ENCODE measurements at regions of chr1 and their contacts with region 1.

Region 1: GRCh38 chr1:153633716-153634665 is at the start of gene CHTOP:
- DNase-seq: peak; percentile 98
- ATAC-seq: peak; percentile 92
- H3K4me3 Mint-ChIP-seq: peak within 1 kb of the TSS; percentile 86
- H3K27ac Mint-ChIP-seq: peak within 1 kb of the TSS; percentile 100
- H3K4me1 Mint-ChIP-seq: peaks cover 22% of the 10 kb centered on the region
- H3K27me3 Mint-ChIP-seq: no peaks in the 10 kb centered on the region
- CTCF ChIP-seq: no peak
- total RNA-seq, gene CHTOP: 101 to 105 TPM (median 104 TPM) in 3 replicates

Region 2: DNA sequence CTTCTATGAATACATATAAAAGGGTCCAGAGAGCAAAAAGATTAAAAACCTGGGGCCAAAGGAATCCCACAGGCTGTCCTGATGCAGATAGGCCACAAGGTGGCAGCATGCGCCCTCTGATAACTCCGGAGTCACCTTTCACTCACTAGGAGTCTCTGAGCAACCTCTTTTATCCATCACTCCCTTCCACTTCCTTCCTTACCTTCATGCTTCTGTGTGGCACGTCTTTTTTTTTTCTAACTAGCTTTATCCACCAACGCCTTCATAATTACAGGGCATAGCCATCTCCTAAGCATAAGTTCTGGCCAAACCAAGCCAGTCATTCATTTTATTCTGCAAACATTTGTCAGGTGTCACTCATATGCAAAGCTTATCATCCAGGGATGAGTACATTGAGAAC is 281.5 kb before region 1 on chr1:
- CTCF ChIA-PET with region 1: interaction called, 12 read pairs
- POLR2A ChIA-PET with region 1: no interaction called
- DNase-seq: peak; percentile 68
- ATAC-seq: peak; percentile 29
- H3K4me3 Mint-ChIP-seq: no peak overlapping the region
- H3K27ac Mint-ChIP-seq: no peak overlapping the region
- H3K4me1 Mint-ChIP-seq: peaks cover 6% of the 10 kb centered on the region; the same call in 1 of the 2 replicates
- H3K27me3 Mint-ChIP-seq: peaks cover 18% of the 10 kb centered on the region; the same call in 1 of the 2 replicates
- CTCF ChIP-seq: peak; percentile 76

Region 3: DNA sequence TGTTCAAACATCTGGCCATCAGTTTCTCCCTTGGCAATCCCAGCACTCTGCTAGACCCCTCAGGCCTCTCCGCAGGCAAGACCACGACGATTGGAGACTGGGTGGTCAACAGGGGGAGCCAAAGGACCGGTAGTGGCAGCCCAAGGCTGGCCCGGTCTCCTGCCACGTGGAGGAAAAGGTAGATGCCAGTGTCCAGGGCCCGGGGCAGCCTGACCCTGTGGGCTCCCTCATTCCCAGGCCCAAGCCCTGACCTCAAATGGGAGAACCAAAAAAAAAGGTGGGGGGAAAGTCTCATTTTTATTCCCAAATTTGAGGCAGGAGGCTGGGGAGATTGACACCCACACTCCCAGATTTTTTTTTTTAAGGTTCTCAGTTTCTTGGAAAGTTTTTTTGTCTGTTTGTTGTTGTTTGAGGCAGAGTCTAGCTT is 123.0 kb before region 1 on chr1:
- CTCF ChIA-PET with region 1: interaction called, 36 read pairs
- POLR2A ChIA-PET with region 1: no interaction called
- DNase-seq: peak; percentile 93
- ATAC-seq: peak; percentile 96
- H3K4me3 Mint-ChIP-seq: no peak overlapping the region
- H3K27ac Mint-ChIP-seq: no peak overlapping the region
- H3K4me1 Mint-ChIP-seq: peaks cover 5% of the 10 kb centered on the region; the same call in 1 of the 2 replicates
- H3K27me3 Mint-ChIP-seq: peaks cover 38% of the 10 kb centered on the region
- CTCF ChIP-seq: peak; percentile 81

Region 4: GRCh38 chr1:153608742-153609584 is 25.0 kb before region 1 on chr1:
- CTCF ChIA-PET with region 1: interaction called, 230 read pairs
- POLR2A ChIA-PET with region 1: interaction called, 8 read pairs
- DNase-seq: peak; percentile 84
- ATAC-seq: peak; percentile 71
- H3K4me3 Mint-ChIP-seq: peak overlapping the region; percentile 29
- H3K27ac Mint-ChIP-seq: peak overlapping the region; percentile 90; the same call in 1 of the 2 replicates
- H3K4me1 Mint-ChIP-seq: peaks cover 64% of the 10 kb centered on the region
- H3K27me3 Mint-ChIP-seq: no peaks in the 10 kb centered on the region; the same call in 1 of the 2 replicates
- CTCF ChIP-seq: no peak

Region 5: DNA sequence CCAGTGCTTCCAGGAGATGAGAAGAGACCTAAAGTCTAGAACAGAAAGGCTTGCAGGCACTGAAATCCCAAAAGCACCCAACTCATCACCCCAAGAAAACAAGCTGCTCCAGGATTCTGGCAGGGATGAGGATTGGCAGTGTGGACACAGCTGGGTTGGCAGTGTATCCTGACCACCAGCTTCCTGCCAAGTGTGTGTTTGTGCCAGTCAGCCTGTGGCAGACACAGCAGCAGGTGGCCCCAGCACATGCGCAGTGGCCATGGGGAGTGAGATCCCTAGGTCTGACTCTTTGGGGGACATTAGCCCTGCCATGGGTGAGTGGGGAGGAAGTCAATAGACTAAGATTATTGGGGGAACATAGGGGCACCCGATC is 15.9 kb after region 1 on chr1:
- CTCF ChIA-PET with region 1: interaction called, 7 read pairs
- POLR2A ChIA-PET with region 1: interaction called, 14 read pairs
- DNase-seq: no peak
- ATAC-seq: no peak
- H3K4me3 Mint-ChIP-seq: no peak overlapping the region
- H3K27ac Mint-ChIP-seq: no peak overlapping the region
- H3K4me1 Mint-ChIP-seq: peaks cover 8% of the 10 kb centered on the region
- H3K27me3 Mint-ChIP-seq: peaks cover 2% of the 10 kb centered on the region; the same call in 1 of the 2 replicates
- CTCF ChIP-seq: no peak

Region 6: DNA sequence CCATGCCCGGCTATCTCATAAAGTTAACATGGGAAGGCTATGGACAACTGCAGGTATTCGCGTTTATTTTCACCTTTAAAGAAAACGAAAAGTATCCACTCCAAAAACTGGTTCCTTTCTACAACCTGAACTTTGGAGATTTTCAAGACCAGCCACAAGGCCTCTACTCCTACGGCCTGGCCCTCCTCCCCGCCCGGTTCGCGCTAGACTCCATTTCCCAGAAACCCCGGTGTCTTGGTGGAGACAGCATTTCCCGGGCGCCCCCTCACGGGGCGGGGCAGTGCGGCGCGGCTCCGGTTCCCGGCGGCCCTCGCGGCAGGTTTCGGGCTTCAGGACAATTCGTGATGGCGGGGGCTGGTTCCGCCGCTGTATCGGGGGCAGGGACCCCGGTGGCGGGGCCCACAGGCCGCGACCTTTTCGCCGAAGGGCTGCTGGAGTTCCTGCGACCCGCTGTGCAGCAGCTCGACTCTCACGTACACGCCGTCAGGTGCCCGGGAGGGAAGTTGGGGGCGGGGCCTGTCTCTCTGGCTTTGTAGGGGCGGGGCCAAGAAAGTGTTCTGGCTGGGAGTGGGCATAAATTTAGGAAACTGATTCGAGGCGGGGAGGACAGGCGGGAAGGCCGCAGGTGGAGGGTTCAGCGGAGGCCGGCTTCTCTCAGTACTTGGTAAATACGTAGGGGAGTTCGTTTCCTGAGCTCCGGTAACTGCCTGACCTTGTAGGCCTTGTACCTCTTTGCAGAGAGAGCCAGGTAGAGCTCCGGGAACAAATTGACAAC is 24.6 kb after region 1 on chr1 and contains the start of gene SNAPIN:
- CTCF ChIA-PET with region 1: no interaction called
- POLR2A ChIA-PET with region 1: interaction called, 11 read pairs
- DNase-seq: peak; percentile 92
- ATAC-seq: peak; percentile 94
- H3K4me3 Mint-ChIP-seq: peak within 1 kb of the TSS; percentile 92
- H3K27ac Mint-ChIP-seq: peak within 1 kb of the TSS; percentile 88
- H3K4me1 Mint-ChIP-seq: peaks cover 8% of the 10 kb centered on the region
- H3K27me3 Mint-ChIP-seq: peaks cover 2% of the 10 kb centered on the region; the same call in 1 of the 2 replicates
- CTCF ChIP-seq: no peak
- total RNA-seq, gene SNAPIN: 23.4 to 29.9 TPM (median 26.7 TPM) in 3 replicates

Region 7: GRCh38 chr1:153775458-153776327 is 141.7 kb after region 1 on chr1:
- CTCF ChIA-PET with region 1: interaction called, 4 read pairs
- POLR2A ChIA-PET with region 1: interaction called, 13 read pairs
- DNase-seq: peak; percentile 95
- ATAC-seq: peak; percentile 85
- H3K4me3 Mint-ChIP-seq: peak overlapping the region; percentile 86
- H3K27ac Mint-ChIP-seq: peak overlapping the region; percentile 74; the same call in 1 of the 2 replicates
- H3K4me1 Mint-ChIP-seq: peaks cover 36% of the 10 kb centered on the region
- H3K27me3 Mint-ChIP-seq: no peaks in the 10 kb centered on the region
- CTCF ChIP-seq: no peak

Measured in WTC11 (cell line).